Vagina (tissue), 2 donors: ENCODE measurements at regions of chr3 and their contacts with region 1.

Region 1: DNA sequence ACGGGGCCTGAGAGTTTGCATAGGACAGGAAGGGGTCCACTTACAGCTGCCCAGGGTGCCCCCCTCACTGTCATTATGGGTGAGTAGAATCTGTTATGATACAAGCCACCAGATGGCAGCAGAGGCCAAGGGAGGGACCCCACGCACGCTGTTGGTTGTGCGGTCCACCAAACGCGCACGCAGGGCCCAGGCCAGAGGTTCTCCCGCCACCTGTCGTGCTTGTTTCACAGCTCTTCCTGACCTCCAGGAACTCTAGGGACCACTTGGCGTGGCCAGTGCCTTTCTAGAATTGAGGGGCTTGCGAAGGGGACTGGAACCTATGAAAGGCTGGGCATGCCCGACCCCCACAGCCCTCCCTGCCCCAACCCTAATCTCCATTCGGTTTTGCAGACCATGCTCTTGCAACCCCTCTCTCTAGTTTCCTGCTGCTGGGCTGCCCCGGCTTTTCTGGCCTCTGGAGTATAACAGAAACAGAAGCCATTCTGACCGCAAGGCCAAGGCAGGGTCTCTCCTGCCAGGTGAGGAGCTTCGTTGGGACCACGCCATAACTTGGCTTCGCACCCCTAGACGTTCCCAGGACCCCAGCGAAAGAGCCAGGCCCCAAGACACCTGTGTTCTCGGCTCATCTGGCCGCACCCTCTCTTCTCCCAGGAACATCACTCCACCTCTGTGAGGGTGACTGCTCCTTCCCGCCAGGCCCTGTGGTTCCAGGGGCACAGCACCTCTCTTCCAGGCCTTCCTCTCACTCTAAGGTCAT is 46.0 kb downstream of the ALDH1L1 start:
- DNase-seq: peak; percentile 81 to 87
- H3K4me3 ChIP-seq: no peak overlapping the region
- H3K27ac ChIP-seq: no peak overlapping the region
- H3K4me1 ChIP-seq: no peaks in the 10 kb centered on the region
- H3K27me3 ChIP-seq: no peaks in the 10 kb centered on the region
- CTCF ChIP-seq: peak; percentile 70 to 87 (median 80)
- POLR2A ChIP-seq: no peak

Region 2: GRCh38 chr3:126208618-126209256 is 74.3 kb after region 1 on chr3:
- intact Hi-C with region 1: loop called (anchors 10 kb)
- DNase-seq: no peak
- H3K4me3 ChIP-seq: no peak overlapping the region
- H3K27ac ChIP-seq: no peak overlapping the region
- H3K4me1 ChIP-seq: peaks cover 14% of the 10 kb centered on the region
- H3K27me3 ChIP-seq: no peaks in the 10 kb centered on the region
- CTCF ChIP-seq: no peak
- POLR2A ChIP-seq: no peak

Region 3: DNA sequence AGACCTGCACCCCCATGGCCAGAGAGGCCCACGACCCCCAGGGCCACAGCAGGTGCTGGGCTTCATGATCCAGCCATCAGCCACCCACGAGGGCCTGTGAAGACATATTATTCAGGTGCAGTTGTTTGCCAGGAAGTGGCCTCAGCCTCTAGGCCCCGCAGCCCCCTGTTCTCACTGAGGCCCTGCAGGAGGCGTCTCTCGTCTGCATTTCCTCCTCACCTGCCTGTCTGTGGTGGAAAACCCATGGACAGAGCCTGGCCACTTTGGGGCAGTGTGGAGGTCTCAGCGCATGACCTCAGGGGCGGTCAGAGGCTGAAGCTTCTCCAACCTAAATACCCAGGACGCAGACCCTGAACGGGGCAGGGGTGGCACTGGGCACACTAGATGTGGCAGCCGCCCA is 364.5 kb after region 1 on chr3:
- intact Hi-C with region 1: no loop called
- DNase-seq: no peak
- H3K4me3 ChIP-seq: no peak overlapping the region
- H3K27ac ChIP-seq: no peak overlapping the region
- H3K4me1 ChIP-seq: peaks cover 3% of the 10 kb centered on the region
- H3K27me3 ChIP-seq: no peaks in the 10 kb centered on the region
- CTCF ChIP-seq: no peak
- POLR2A ChIP-seq: no peak

Region 4: GRCh38 chr3:127535901-127536829 is 1401.8 kb after region 1 on chr3:
- intact Hi-C with region 1: no loop called
- DNase-seq: no peak
- H3K4me3 ChIP-seq: no peak overlapping the region
- H3K27ac ChIP-seq: no peak overlapping the region
- H3K4me1 ChIP-seq: no peaks in the 10 kb centered on the region
- H3K27me3 ChIP-seq: no peaks in the 10 kb centered on the region
- CTCF ChIP-seq: no peak
- POLR2A ChIP-seq: no peak